ENCODE measurements at regions of chr15 and their contacts with region 1.

Region 1: GRCh38 chr15:55977226-55977625 is 16.2 kb downstream of the NEDD4 start:
- DNase-seq: no peak
- ATAC-seq: no peak
- H3K4me3 ChIP-seq: no peak overlapping the region
- H3K27ac ChIP-seq: no peak overlapping the region
- H3K4me1 ChIP-seq: no peaks in the 10 kb centered on the region
- H3K27me3 ChIP-seq: no peaks in the 10 kb centered on the region
- CTCF ChIP-seq: no peak
- POLR2A ChIP-seq: no peak
- RAD21 ChIP-seq: no peak

Region 2: GRCh38 chr15:55937040-55937439 is 40.2 kb before region 1 on chr15:
- CTCF ChIA-PET with region 1: no interaction called
- POLR2A ChIA-PET with region 1: no interaction called
- dilution Hi-C with region 1: no loop called
- in situ Hi-C with region 1: no loop called
- intact Hi-C with region 1: loop called (anchors 5 kb)
- DNase-seq: peak; percentile 64
- ATAC-seq: no peak
- H3K4me3 ChIP-seq: no peak overlapping the region
- H3K27ac ChIP-seq: no peak overlapping the region
- H3K4me1 ChIP-seq: no peaks in the 10 kb centered on the region; the same call in 1 of the 2 replicates
- H3K27me3 ChIP-seq: no peaks in the 10 kb centered on the region
- CTCF ChIP-seq: no peak
- POLR2A ChIP-seq: no peak
- RAD21 ChIP-seq: no peak

Region 3: GRCh38 chr15:56411122-56411749 is 434.0 kb after region 1 on chr15:
- CTCF ChIA-PET with region 1: no interaction called
- POLR2A ChIA-PET with region 1: no interaction called
- dilution Hi-C with region 1: no loop called
- in situ Hi-C with region 1: no loop called
- intact Hi-C with region 1: loop called (anchors 5 kb)
- DNase-seq: peak; percentile 0
- ATAC-seq: no peak
- H3K4me3 ChIP-seq: no peak overlapping the region
- H3K27ac ChIP-seq: no peak overlapping the region
- H3K4me1 ChIP-seq: no peaks in the 10 kb centered on the region
- H3K27me3 ChIP-seq: no peaks in the 10 kb centered on the region
- CTCF ChIP-seq: no peak
- POLR2A ChIP-seq: no peak
- RAD21 ChIP-seq: no peak